ENCODE measurements at regions of chr18 and their contacts with region 1.

Region 1: DNA sequence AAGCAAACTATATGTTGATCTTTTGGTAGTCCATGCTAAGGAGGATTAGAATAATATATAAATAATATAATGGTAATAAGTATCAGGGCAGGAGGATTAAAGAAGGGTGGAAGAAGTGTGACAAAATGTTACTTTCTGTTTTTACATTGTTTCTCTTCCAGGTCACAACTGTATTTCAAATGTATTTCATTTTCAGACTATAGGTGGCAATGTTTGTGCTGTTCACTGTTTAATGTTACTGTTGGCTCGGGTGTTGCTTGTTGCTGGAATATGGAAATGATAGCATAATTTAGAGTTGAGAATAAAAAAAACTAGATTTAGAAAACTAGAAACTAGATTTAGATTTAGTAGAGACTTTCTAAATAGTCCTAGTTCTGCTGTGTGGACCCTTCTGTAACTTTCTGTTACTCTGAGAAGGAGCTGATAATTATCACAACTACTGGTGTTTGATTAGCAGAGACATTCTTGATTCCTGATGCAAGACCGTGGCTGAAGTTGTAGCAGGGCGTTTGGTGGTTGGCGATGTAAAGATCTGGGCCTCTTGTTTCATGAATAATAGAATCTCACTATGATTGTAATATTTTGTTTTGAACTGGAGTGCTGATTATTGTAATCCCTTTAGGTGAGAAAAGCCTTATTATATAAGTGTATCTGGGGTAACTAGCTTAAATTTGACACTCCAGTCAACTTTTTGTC is 7.9 kb downstream of the NEDD4L start:
- DNase-seq: peak; percentile 43 to 63 (median 62)
- H3K4me3 ChIP-seq: no peak overlapping the region
- H3K27ac ChIP-seq: no peak overlapping the region
- H3K4me1 ChIP-seq: peaks cover 0 to 6% (median 4%) of the 10 kb centered on the region in 4 experiments
- H3K27me3 ChIP-seq: no peaks in the 10 kb centered on the region

Region 2: GRCh38 chr18:57915865-57916582 is 135.9 kb before region 1 on chr18:
- CTCF ChIA-PET with region 1: no interaction called
- POLR2A ChIA-PET with region 1: no interaction called
- DNase-seq: peak in 2 of 3 donors; percentile 14 to 28
- H3K4me3 ChIP-seq: no peak overlapping the region
- H3K27ac ChIP-seq: no peak overlapping the region
- H3K4me1 ChIP-seq: peaks cover 0 to 6% (median 1%) of the 10 kb centered on the region in 4 experiments
- H3K27me3 ChIP-seq: no peaks in the 10 kb centered on the region

Region 3: GRCh38 chr18:58032233-58032632 is 19.7 kb before region 1 on chr18:
- CTCF ChIA-PET with region 1: no interaction called
- POLR2A ChIA-PET with region 1: no interaction called
- DNase-seq: no peak
- H3K4me3 ChIP-seq: no peak overlapping the region
- H3K27ac ChIP-seq: no peak overlapping the region
- H3K4me1 ChIP-seq: no peaks in the 10 kb centered on the region
- H3K27me3 ChIP-seq: peaks cover 0 to 7% (median 4%) of the 10 kb centered on the region in 5 experiments

Region 4: GRCh38 chr18:58064406-58064998 is 12.6 kb after region 1 on chr18:
- CTCF ChIA-PET with region 1: interaction called, 23 read pairs
- POLR2A ChIA-PET with region 1: no interaction called
- DNase-seq: peak in 2 of 3 donors; percentile 46 to 64
- H3K4me3 ChIP-seq: no peak overlapping the region
- H3K27ac ChIP-seq: no peak overlapping the region
- H3K4me1 ChIP-seq: peaks cover 0 to 3% (median 0%) of the 10 kb centered on the region in 4 experiments
- H3K27me3 ChIP-seq: no peaks in the 10 kb centered on the region

Region 5: DNA sequence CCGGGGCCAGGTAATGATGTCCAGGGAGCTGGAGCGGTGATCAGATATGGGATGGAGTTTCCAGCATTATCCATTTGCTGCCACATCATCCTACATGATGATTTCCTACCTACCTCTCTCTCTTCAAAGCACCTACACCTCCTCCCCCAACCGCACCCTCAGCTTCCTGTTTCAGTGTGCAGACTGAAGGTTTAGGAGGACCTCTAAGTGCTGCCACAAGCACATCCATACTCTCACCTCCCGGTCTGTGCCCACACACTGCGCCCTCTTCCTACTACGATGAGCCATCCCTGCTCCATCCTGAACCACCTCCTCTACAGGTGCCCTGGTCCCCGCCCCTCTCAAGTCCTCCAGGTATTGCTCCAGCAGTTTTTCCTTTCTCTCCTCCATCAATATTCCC is 453.3 kb after region 1 on chr18:
- CTCF ChIA-PET with region 1: no interaction called
- POLR2A ChIA-PET with region 1: no interaction called
- DNase-seq: no peak
- H3K4me3 ChIP-seq: no peak overlapping the region
- H3K27ac ChIP-seq: no peak overlapping the region
- H3K4me1 ChIP-seq: no peaks in the 10 kb centered on the region
- H3K27me3 ChIP-seq: no peaks in the 10 kb centered on the region

Measured in common myeloid progenitor, CD34-positive (primary cell).